ENCODE measurements at regions of chr1 and their contacts with region 1.

Region 1: GRCh38 chr1:167273027-167273800 is 52.5 kb downstream of the POU2F1 start:
- DNase-seq: no peak
- ATAC-seq: peak; percentile 62
- H3K4me3 ChIP-seq: no peak overlapping the region
- H3K27ac ChIP-seq: no peak overlapping the region
- H3K4me1 ChIP-seq: peaks cover 4% of the 10 kb centered on the region in 2 experiments; a peak in 1 of 5 replicates
- H3K27me3 ChIP-seq: no peaks in the 10 kb centered on the region
- CTCF ChIP-seq: no peak
- EP300 ChIP-seq: no peak
- POLR2A ChIP-seq: no peak
- RAD21 ChIP-seq: no peak

Region 2: DNA sequence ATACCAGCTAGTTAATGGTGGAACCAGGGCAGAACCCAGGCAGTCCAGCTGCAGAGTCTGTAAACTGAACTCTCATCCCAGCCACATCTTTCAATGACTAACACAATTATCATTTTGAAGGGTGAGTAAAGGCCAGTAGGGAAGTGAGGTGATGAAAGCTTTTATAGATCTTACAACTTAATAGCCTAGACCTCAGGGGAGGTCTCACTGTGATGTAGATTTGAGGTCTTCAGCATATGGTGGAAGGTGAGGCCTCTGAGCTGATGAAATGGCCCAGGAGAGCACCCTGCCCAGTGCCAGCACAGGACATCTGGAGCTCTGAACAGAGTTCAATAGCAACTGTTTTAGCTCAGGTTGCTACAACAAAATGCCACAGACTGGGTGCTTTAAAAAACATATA is 97.3 kb before region 1 on chr1:
- CTCF ChIA-PET with region 1: no interaction called
- POLR2A ChIA-PET with region 1: no interaction called
- in situ Hi-C with region 1: no loop called
- intact Hi-C with region 1: no loop called
- DNase-seq: no peak
- ATAC-seq: no peak
- H3K4me3 ChIP-seq: no peak overlapping the region
- H3K27ac ChIP-seq: no peak overlapping the region
- H3K4me1 ChIP-seq: no peaks in the 10 kb centered on the region
- H3K27me3 ChIP-seq: peaks cover 27 to 37% of the 10 kb centered on the region in 2 experiments
- CTCF ChIP-seq: no peak
- EP300 ChIP-seq: no peak
- POLR2A ChIP-seq: no peak
- RAD21 ChIP-seq: no peak

Region 3: GRCh38 chr1:167288390-167289074 is 15.3 kb after region 1 on chr1:
- CTCF ChIA-PET with region 1: no interaction called
- POLR2A ChIA-PET with region 1: interaction called, 11 read pairs
- in situ Hi-C with region 1: no loop called
- intact Hi-C with region 1: no loop called
- DNase-seq: peak in 1 of 4 experiments; percentile 35
- ATAC-seq: peak; percentile 76
- H3K4me3 ChIP-seq: no peak overlapping the region
- H3K27ac ChIP-seq: no peak overlapping the region
- H3K4me1 ChIP-seq: peaks cover 0 to 10% of the 10 kb centered on the region in 2 experiments; a peak in 4 of 5 replicates
- H3K27me3 ChIP-seq: no peaks in the 10 kb centered on the region
- CTCF ChIP-seq: no peak
- EP300 ChIP-seq: no peak
- POLR2A ChIP-seq: no peak
- RAD21 ChIP-seq: no peak

Region 4: DNA sequence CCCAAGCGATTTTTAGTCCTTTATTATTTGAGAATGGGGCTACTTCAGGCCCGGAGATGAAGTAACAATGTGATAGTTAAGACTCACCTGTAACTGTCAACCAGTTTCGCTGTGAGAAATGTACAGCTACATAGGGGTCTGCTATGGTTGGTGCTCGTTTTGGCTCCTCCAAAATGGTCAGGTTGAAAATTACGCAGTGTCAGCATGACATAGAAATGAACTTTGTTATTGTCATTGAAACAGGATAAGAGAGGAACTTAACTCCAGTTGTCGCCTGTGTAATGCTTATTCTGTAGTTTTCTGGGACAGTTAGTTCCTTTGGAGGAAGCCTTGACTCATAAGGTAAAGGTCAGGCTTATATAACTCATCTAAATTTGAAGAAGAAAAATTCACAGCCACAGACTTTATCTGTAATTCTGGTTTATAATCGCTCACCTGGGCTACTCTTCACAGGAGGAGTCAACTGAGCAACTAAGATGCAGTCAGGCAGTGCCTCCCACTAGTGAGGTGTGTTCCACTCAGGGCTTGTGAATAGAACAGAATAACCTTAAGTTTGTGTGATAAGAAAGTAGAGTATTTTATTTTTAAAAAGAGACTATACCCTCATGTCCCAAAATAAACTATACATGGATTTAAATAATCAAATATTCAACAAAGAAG is 114.2 kb after region 1 on chr1:
- CTCF ChIA-PET with region 1: no interaction called
- POLR2A ChIA-PET with region 1: no interaction called
- in situ Hi-C with region 1: no loop called
- intact Hi-C with region 1: loop called (anchors 5 kb)
- DNase-seq: peak in 2 of 4 experiments; percentile 17 to 31
- ATAC-seq: peak; percentile 82
- H3K4me3 ChIP-seq: no peak overlapping the region
- H3K27ac ChIP-seq: peak overlapping the region; percentile 45; the same call in 1 of the 3 replicates
- H3K4me1 ChIP-seq: peaks cover 0 to 9% of the 10 kb centered on the region in 2 experiments; a peak in 2 of 5 replicates
- H3K27me3 ChIP-seq: no peaks in the 10 kb centered on the region
- CTCF ChIP-seq: no peak
- EP300 ChIP-seq: no peak
- POLR2A ChIP-seq: no peak
- RAD21 ChIP-seq: no peak

Region 5: GRCh38 chr1:167442124-167442848 is 169.1 kb after region 1 on chr1:
- CTCF ChIA-PET with region 1: interaction called, 13 read pairs
- POLR2A ChIA-PET with region 1: interaction called, 3 read pairs
- in situ Hi-C with region 1: loop called (anchors 5 kb)
- intact Hi-C with region 1: loop called (anchors 1 kb)
- DNase-seq: peak; percentile 91 to 94 (median 92)
- ATAC-seq: peak; percentile 98
- H3K4me3 ChIP-seq: no peak overlapping the region
- H3K27ac ChIP-seq: no peak overlapping the region
- H3K4me1 ChIP-seq: peaks cover 2 to 13% of the 10 kb centered on the region in 2 experiments; a peak in 3 of 5 replicates
- H3K27me3 ChIP-seq: peaks cover 10 to 37% of the 10 kb centered on the region in 2 experiments
- CTCF ChIP-seq: peak; percentile 96 to 98 (median 97)
- EP300 ChIP-seq: no peak
- POLR2A ChIP-seq: no peak
- RAD21 ChIP-seq: peak; percentile 99 to 100

Region 6: GRCh38 chr1:168170564-168171508 is 897.6 kb after region 1 on chr1:
- CTCF ChIA-PET with region 1: no interaction called
- POLR2A ChIA-PET with region 1: no interaction called
- in situ Hi-C with region 1: no loop called
- intact Hi-C with region 1: no loop called
- DNase-seq: peak; percentile 16 to 50 (median 44)
- ATAC-seq: peak; percentile 79
- H3K4me3 ChIP-seq: no peak overlapping the region
- H3K27ac ChIP-seq: no peak overlapping the region
- H3K4me1 ChIP-seq: peaks cover 0 to 5% of the 10 kb centered on the region in 2 experiments; a peak in 1 of 5 replicates
- H3K27me3 ChIP-seq: no peaks in the 10 kb centered on the region
- CTCF ChIP-seq: no peak
- EP300 ChIP-seq: no peak
- POLR2A ChIP-seq: no peak
- RAD21 ChIP-seq: no peak

Region 7: DNA sequence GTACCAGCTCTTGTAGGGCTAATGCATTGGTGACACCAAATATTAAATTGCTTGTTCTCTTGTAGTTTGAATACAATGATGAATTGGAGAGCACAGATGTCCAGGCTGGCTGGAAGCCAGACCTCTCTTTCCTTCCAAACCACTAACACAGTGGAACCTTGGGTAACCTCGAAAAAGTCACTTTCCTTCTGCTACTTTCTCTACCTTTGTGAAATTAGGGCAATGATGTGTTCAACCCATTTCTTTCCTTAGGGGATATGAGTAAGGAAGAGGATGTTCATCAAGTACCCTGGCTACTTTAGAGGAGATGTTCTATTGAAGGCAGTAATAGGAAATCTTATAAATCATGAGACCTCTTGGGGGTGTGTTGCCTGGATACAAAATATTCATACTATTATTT is 1214.9 kb after region 1 on chr1:
- CTCF ChIA-PET with region 1: no interaction called
- POLR2A ChIA-PET with region 1: no interaction called
- in situ Hi-C with region 1: no loop called
- intact Hi-C with region 1: no loop called
- DNase-seq: no peak
- ATAC-seq: no peak
- H3K4me3 ChIP-seq: no peak overlapping the region
- H3K27ac ChIP-seq: no peak overlapping the region
- H3K4me1 ChIP-seq: no peaks in the 10 kb centered on the region
- H3K27me3 ChIP-seq: peaks cover 0 to 2% of the 10 kb centered on the region in 2 experiments; a peak in 2 of 5 replicates
- CTCF ChIP-seq: no peak
- EP300 ChIP-seq: no peak
- POLR2A ChIP-seq: no peak
- RAD21 ChIP-seq: no peak

Measured in K562 (cell line).